Activated T-helper 1 cell treated with anti-CD3 and anti-CD28 coated beads, Interleukin-12 subunit alpha, Interleukin-12 subunit beta, Interleukin-2, Interleukin-4 antibody, amounts not matched to agents 30 ng/mL and 10 ng/mL and 1 ng/mL, durations not matched to agents 14 hours and 24 hours and 36 hours (primary cell): ENCODE measurements at regions of chr5 and their contacts with region 1.

Region 1: GRCh38 chr5:40578501-40579451 is 100.9 kb upstream of the PTGER4 start:
- DNase-seq: peak; percentile 40
- H3K4me3 Mint-ChIP-seq: peak overlapping the region; percentile 68
- H3K27ac Mint-ChIP-seq: peak overlapping the region; percentile 92
- H3K4me1 Mint-ChIP-seq: peaks cover 42% of the 10 kb centered on the region
- H3K27me3 Mint-ChIP-seq: no peaks in the 10 kb centered on the region

Region 2: DNA sequence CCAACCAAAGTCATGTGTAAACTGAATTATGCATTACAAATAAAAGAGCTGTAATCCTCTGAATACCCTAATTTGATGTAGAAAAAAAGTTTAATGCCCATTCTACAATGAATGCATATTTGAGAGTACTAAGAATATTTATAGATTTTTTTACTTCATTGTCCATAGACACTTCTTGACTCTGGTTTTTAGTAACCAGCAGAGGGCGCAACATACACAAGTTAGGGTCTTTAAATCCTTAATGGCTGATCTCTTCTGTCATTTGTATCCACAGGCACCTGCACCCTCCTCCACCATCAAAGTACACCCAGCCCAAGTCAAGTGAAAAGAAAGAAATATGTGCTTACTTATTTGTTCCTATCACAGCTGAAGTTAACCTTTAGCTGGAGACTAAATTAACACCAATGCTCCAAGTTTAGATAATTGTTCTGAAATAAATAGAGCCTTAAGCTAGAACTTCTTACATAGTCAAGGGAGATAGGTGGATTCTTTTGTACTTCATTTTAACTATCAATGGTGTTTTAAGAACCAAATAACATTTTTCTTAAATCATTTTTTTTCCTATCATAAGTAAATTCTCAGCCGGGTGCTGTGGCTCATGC is 629.8 kb before region 1 on chr5:
- intact Hi-C with region 1: loop called (anchors 1 kb)
- DNase-seq: peak; percentile 46
- H3K4me3 Mint-ChIP-seq: no peak overlapping the region
- H3K27ac Mint-ChIP-seq: peak overlapping the region; percentile 7
- H3K4me1 Mint-ChIP-seq: peaks cover 6% of the 10 kb centered on the region
- H3K27me3 Mint-ChIP-seq: peaks cover 5% of the 10 kb centered on the region

Region 3: GRCh38 chr5:40404613-40405012 is 174.2 kb before region 1 on chr5:
- intact Hi-C with region 1: loop called (anchors 1 kb)
- DNase-seq: peak; percentile 12
- H3K4me3 Mint-ChIP-seq: peak overlapping the region; percentile 59
- H3K27ac Mint-ChIP-seq: peak overlapping the region; percentile 99
- H3K4me1 Mint-ChIP-seq: peaks cover 86% of the 10 kb centered on the region
- H3K27me3 Mint-ChIP-seq: no peaks in the 10 kb centered on the region

Region 4: DNA sequence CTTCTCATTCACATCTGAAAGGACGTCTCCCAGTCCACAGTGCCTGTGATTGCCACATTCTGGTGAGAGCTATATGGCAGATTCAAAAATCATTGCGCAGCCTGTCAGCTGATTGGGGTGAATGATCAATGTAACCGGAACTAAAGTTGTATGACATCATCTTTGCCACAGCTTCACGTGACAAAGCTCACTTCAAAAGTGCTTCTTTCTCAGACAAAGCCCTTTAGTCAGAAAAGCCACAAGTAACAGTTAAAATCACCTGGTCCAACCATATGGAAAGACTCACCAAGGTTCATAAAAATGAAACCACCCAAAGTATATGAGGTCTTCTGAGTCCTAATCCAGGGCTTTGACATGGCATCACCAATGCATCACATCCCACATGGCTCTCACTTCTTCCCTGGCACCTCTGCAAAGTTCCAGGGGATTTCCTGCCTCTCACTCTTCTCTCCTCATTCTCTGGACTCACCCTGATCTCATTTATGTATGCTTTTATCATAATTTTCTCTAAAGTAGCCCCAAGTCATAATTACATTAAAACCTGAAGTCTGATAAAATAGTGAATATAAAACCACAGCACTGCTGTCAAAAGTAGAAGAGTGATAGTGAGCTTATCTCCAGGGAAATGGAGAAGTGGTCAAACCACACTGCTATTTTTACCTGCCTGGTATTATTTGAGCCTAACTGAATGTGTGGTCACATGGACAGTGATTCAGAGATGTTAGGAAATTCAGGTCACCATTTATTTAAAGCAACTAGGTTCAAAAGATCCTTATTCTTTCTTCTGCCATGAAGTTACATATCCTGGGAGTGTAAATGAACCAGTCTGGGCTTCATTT is 92.1 kb before region 1 on chr5:
- intact Hi-C with region 1: loop called (anchors 1 kb)
- DNase-seq: peak; percentile 63
- H3K4me3 Mint-ChIP-seq: peak overlapping the region; percentile 23
- H3K27ac Mint-ChIP-seq: peak overlapping the region; percentile 83
- H3K4me1 Mint-ChIP-seq: peaks cover 79% of the 10 kb centered on the region
- H3K27me3 Mint-ChIP-seq: no peaks in the 10 kb centered on the region

Region 5: DNA sequence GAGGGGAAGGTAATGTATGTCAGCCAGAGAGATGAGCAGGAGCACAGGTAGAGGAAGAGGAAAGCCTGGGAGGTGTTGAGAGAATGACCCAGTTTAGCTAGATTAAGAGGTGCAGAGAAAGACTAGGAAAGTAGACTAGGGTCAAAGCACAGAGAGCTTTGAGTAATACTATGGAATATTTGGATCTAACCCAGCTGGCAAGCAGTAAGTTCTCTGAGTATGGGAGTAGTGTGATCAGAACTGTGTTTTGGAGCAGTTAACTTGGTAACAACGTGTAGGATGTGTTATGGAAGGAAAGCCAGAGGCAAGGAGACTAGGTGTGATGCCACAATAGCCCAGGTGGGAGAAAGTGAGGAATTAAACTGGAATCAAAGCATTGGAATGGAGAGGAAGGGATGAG is 16.0 kb after region 1 on chr5:
- intact Hi-C with region 1: no loop called
- DNase-seq: no peak
- H3K4me3 Mint-ChIP-seq: no peak overlapping the region
- H3K27ac Mint-ChIP-seq: no peak overlapping the region
- H3K4me1 Mint-ChIP-seq: peaks cover 30% of the 10 kb centered on the region
- H3K27me3 Mint-ChIP-seq: no peaks in the 10 kb centered on the region

Region 6: DNA sequence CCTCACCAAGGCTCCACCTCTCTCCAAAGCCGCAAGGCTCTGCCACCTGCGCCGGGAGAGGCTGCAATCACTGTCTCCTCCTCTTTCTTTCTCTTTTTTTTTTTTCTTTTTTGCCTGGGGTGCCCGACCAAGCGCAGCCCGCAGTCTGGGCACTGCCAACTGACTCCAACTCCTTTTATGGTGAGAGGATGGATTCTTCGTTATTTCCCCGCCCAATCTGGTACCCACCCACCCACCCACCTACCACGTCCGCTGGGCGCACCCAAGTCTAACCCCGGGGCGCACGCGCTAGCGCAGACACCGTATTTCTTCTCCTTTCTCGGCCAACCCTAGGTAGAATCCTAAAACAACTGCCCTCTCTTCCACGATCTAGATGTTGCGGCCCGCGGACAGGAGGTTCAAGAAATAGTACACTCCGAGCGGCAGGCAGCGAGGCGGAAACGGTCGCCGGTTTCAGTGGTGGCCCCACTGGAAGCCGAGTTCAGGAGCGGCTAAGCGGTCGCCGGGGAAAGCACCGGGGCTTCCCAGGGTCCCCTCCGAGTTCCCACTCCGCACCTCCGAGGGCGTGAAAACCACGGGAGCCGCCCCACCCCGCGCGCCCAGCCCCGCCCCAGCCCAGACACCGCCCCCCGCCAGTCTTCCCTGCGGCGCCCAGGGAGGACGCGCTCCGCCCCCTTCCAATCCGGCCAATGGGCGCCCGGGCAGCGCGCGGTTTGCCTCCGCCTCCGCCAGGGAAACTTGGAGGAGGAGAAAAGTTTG is 100.6 kb after region 1 on chr5:
- intact Hi-C with region 1: loop called (anchors 1 kb)
- DNase-seq: peak; percentile 91
- H3K4me3 Mint-ChIP-seq: peak overlapping the region; percentile 99
- H3K27ac Mint-ChIP-seq: peak overlapping the region; percentile 99
- H3K4me1 Mint-ChIP-seq: peaks cover 66% of the 10 kb centered on the region
- H3K27me3 Mint-ChIP-seq: no peaks in the 10 kb centered on the region

Region 7: DNA sequence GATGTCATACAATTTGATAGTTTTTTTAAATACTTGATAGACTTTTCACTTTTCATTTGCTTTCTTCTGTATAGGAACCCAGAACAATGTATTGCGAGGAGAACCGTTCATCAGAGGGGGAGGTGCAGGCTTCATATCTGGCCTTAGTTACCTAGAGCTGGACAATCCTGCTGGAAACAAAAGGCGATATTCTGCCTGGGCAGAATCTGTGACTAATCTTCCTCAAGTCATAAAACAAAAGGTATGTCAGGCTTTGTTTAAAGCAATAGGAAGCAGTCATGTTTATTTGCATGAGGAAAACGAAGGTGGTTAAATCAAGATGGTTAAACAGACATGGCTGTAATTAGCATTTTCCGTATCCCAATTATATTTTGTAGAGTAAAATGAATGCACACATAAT is 376.5 kb after region 1 on chr5:
- intact Hi-C with region 1: no loop called
- DNase-seq: no peak
- H3K4me3 Mint-ChIP-seq: no peak overlapping the region
- H3K27ac Mint-ChIP-seq: no peak overlapping the region
- H3K4me1 Mint-ChIP-seq: no peaks in the 10 kb centered on the region
- H3K27me3 Mint-ChIP-seq: no peaks in the 10 kb centered on the region